Heart right ventricle (tissue), 16 donors: ENCODE measurements at regions of chr6 and their contacts with region 1.

Region 1: DNA sequence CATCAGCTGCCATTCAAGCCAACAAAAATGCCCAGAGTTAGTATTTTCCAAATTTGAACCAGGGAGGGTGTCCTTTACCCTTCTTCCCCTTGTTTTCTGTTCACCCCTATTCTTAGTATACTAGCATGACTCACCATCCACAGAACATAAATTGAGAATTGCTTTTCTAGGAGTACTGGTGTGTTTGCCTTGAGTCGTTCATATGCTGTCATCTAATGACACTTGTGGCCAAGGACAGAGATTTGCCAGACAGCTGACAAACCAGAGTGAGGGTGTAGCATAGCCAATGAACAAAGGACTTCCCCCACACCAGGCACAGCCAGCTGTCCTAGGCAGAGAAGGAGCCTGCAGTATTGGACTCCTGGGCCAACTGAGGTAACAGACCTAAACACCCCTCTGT is 62.2 kb downstream of the FILIP1 start:
- DNase-seq: peak; percentile 23 to 73
- ATAC-seq: peak; percentile 86 to 98 (median 93)
- H3K4me3 ChIP-seq: peak overlapping the region in 1 of 10 donors; percentile 8
- H3K27ac ChIP-seq: peak overlapping the region; percentile 41 to 83 (median 58)
- H3K4me1 ChIP-seq: peaks cover 12 to 81% (median 60%) of the 10 kb centered on the region in 9 donors
- H3K27me3 ChIP-seq: no peaks in the 10 kb centered on the region
- CTCF ChIP-seq: no peak

Region 2: GRCh38 chr6:75376347-75377024 is 54.9 kb before region 1 on chr6:
- intact Hi-C with region 1: loop called in 1 of 10 experiments (anchors 10 kb)
- DNase-seq: no peak
- ATAC-seq: peak in 1 of 8 donors; percentile 46
- H3K4me3 ChIP-seq: no peak overlapping the region
- H3K27ac ChIP-seq: no peak overlapping the region
- H3K4me1 ChIP-seq: peaks cover 0 to 36% (median 17%) of the 10 kb centered on the region in 9 donors
- H3K27me3 ChIP-seq: no peaks in the 10 kb centered on the region
- CTCF ChIP-seq: no peak

Region 3: DNA sequence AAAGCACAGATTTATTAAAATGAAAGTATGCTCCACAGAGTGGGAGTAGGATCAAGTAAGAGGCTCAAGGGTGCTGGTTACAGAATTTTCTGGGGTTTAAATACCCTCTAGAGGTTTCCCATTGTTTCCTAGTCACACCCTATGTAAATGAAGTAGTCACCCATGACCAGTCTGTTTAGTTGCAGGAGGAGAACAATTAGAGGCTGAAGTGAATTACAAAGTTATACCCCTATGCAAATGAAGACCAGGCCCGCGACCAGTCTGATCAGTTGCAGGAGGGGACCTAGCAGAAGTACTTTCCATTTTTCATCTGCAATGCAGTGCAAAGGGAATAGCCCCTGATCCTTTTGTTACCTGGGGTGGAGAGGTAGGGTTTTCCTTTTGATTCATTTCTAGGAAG is 74.0 kb after region 1 on chr6:
- intact Hi-C with region 1: no loop called
- DNase-seq: no peak
- ATAC-seq: peak in 1 of 8 donors; percentile 38
- H3K4me3 ChIP-seq: no peak overlapping the region
- H3K27ac ChIP-seq: no peak overlapping the region
- H3K4me1 ChIP-seq: peaks cover 0 to 33% (median 3%) of the 10 kb centered on the region in 9 donors
- H3K27me3 ChIP-seq: no peaks in the 10 kb centered on the region
- CTCF ChIP-seq: no peak